ENCODE measurements at regions of chr17 and their contacts with region 1.

Region 1: GRCh38 chr17:8832711-8833352 is 33.7 kb upstream of the MFSD6L start:
- DNase-seq: no peak
- ATAC-seq: peak; percentile 60
- H3K4me3 ChIP-seq: no peak overlapping the region
- H3K27ac ChIP-seq: no peak overlapping the region
- H3K4me1 ChIP-seq: no peaks in the 10 kb centered on the region
- H3K27me3 ChIP-seq: no peaks in the 10 kb centered on the region
- CTCF ChIP-seq: peak; percentile 35 to 73 (median 56)
- EP300 ChIP-seq: no peak
- POLR2A ChIP-seq: no peak; the same call in 1 of the 2 replicates
- RAD21 ChIP-seq: 0 out of 2 replicates have a peak, but pooled peaks have one; percentile 11

Region 2: DNA sequence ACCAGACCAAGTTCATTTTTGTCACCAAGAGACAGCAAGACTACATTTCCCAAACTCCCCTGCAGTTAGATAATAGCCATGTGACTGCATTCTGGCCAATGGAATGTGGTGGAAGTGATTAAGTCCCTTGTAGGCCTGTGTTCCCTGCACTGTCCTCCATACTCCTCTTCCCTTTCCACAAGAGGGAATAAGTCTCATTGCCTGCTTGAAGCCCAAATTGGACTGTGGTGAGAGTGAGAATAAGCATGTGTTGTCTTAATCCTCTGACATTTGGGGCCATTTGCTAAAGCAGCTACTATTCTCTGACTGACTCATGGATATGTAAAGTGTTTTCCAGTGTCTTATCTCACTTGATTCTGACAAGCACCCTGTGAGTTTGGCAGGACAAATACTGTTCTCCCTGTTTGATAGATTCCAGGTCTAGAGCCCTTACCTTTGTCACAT is 14.0 kb after region 1 on chr17:
- CTCF ChIA-PET with region 1: interaction called, 16 read pairs
- POLR2A ChIA-PET with region 1: interaction called, 4 read pairs
- RAD21 ChIA-PET with region 1: no interaction called
- SMC1A ChIA-PET with region 1: interaction called, 5 read pairs
- in situ Hi-C with region 1: no loop called
- intact Hi-C with region 1: no loop called
- DNase-seq: no peak
- ATAC-seq: peak; percentile 65
- H3K4me3 ChIP-seq: no peak overlapping the region
- H3K27ac ChIP-seq: peak overlapping the region; percentile 42
- H3K4me1 ChIP-seq: peaks cover 42% of the 10 kb centered on the region
- H3K27me3 ChIP-seq: no peaks in the 10 kb centered on the region
- CTCF ChIP-seq: no peak
- EP300 ChIP-seq: no peak
- POLR2A ChIP-seq: no peak
- RAD21 ChIP-seq: no peak